Activated T-helper 2 cell treated with anti-CD3 and anti-CD28 coated beads, Interferon-gamma antibody, Interleukin-2, Interleukin-4, amounts not matched to agents 10 μg/mL and 5 μg/mL and 100 μg/mL, durations not matched to agents 14 hours and 24 hours and 36 hours (primary cell): ENCODE measurements at regions of chr5 and their contacts with region 1.

Region 1: GRCh38 chr5:113281194-113281593 is 153.6 kb downstream of the TSSK1B start:
- DNase-seq: no peak
- H3K4me3 Mint-ChIP-seq: no peak overlapping the region
- H3K27ac Mint-ChIP-seq: no peak overlapping the region
- H3K4me1 Mint-ChIP-seq: peaks cover 28% of the 10 kb centered on the region
- H3K27me3 Mint-ChIP-seq: peaks cover 13% of the 10 kb centered on the region

Region 2: DNA sequence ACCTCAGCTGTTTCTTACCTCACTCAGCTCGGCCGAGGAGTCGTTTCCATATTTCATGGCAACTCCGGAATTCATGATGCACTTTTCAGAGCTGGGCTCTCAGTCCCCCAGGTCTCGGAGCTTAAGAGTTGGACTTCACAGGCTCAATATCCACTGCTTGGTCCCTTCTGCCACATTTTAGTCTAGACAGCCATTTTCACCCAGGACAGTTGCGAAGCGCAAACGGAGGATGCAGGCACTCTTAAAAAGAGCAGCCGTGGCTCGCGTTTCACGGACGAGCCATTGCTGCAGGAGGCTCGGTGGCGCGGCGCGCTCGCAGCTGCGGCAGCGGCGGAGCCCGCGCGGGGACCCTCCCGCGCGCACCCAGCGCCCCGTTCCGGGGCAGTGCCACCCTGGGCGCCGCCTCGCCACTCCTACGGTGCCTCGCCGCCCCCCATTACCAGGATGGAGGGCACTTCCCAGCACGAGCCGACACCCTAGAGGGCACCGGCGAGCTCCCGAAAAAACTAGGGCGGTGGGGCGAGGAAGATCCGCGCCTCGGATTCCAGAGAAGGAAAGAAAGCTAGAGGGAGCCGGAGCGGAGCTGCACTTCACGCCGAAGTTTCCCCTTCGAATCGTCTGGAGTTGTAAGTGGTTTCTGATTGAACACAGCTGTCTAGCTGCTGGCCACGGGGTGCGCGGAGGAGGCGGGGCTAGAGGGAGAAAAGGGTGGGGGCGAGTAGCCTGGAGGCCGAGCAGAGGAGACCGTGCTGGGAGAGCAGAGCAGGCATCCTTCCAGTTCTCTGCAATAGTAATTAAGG is 13.3 kb after region 1 on chr5:
- intact Hi-C with region 1: loop called (anchors 1 kb)
- DNase-seq: peak; percentile 69
- H3K4me3 Mint-ChIP-seq: peak overlapping the region; percentile 86
- H3K27ac Mint-ChIP-seq: no peak overlapping the region
- H3K4me1 Mint-ChIP-seq: peaks cover 22% of the 10 kb centered on the region
- H3K27me3 Mint-ChIP-seq: peaks cover 69% of the 10 kb centered on the region

Region 3: GRCh38 chr5:113344973-113345940 is 64.1 kb after region 1 on chr5:
- intact Hi-C with region 1: no loop called
- DNase-seq: no peak
- H3K4me3 Mint-ChIP-seq: no peak overlapping the region
- H3K27ac Mint-ChIP-seq: no peak overlapping the region
- H3K4me1 Mint-ChIP-seq: peaks cover 2% of the 10 kb centered on the region
- H3K27me3 Mint-ChIP-seq: peaks cover 43% of the 10 kb centered on the region